Right cardiac atrium (tissue), 5 donors: ENCODE measurements at regions of chr14 and their contacts with region 1.

Region 1: GRCh38 chr14:89416002-89416995 is 734 bp downstream of the FOXN3 start:
- DNase-seq: peak; percentile 98 to 100 (median 98)
- ATAC-seq: peak; percentile 91
- H3K4me3 ChIP-seq: peak overlapping the region; percentile 98
- H3K27ac ChIP-seq: peak overlapping the region; percentile 82
- H3K4me1 ChIP-seq: peaks cover 5% of the 10 kb centered on the region
- H3K27me3 ChIP-seq: no peaks in the 10 kb centered on the region

Region 2: DNA sequence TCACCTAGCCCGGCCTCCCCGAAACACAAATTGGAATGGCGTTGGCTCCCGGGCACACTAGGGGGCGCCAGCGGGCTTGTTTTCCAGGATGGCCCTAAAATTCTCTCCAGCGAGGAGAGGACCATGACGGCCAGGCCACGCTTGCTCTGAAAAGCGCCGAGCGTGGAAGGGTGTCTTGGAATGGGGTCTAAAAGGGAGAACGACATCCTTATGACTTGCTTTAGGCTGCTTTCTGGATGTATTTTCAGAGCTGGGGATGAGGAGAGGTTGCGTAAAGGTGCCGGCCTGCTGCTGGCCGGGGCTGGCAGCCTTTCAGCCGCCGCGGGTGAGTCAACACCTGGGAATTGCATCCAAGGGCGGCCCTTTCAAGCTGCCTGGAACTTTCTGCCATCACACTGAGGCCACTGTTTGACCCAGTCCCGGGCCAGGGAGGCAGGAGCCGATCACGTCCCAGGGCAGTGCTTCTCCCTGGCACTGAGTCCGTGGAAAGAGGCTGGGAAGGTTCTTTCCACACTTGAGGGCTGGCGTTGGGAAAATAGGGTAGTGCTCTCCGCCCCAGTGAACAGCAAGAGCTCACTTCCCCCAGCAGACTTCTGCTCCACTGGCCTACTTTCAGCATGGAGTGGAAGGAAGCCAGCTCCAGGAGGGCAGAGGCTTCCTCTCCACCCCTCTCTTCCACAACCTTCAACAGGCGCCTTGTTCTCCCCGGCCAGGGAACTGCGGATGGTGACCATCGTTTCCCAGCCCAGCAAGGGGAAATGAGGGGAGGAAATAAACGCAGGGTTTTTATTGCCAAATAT is 375.6 kb before region 1 on chr14:
- intact Hi-C with region 1: loop called in 1 of 4 experiments (anchors 10 kb)
- DNase-seq: peak; percentile 91 to 95 (median 94)
- ATAC-seq: peak; percentile 94 to 97
- H3K4me3 ChIP-seq: peak overlapping the region; percentile 23
- H3K27ac ChIP-seq: peak overlapping the region; percentile 79
- H3K4me1 ChIP-seq: peaks cover 6% of the 10 kb centered on the region
- H3K27me3 ChIP-seq: no peaks in the 10 kb centered on the region

Region 3: DNA sequence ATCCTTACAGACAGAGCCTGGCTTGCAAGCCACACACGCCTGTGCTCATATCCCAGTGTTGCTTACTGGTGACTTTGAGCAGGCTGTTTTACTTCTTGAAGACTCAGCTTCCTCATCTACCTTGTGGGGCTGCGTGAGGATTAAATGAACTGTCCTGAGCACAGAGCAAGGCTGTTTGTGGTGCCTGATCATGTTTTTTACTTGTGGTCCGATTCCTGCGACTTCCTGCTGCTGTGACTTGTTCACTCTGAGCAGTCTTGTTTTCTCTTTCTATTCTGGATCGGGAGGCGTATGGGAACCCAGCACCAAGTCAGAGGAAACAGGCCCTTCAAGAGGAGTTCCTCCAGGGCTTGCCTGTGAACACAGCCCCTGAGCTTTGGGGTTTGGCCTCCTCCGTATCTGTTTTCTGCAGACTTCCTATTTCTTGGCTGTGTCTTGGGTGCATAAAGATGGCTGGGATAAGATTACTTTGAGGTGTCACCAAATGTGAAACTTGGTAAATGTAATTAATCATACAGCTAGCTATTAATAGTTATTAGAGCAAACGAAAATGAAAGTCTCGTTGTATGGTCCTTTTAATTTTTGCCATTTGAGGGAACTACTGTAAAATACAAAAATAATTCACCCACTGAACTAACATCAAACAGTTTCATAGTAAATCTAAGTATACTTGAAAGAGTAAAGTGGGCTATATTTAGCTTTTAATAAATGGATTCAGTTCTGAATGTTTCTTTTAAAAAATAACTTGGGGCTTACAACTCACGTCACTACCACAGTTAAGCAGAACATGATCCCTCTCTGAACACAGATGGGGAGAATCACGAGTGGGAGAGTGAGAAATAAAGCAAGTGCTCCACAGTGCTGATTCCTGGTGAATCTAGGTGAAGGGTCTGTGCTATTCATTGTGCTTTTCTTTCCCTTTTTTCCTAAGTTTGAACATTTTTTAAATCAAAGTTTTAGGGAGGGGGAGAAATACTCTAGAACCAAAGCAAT is 250.8 kb before region 1 on chr14:
- intact Hi-C with region 1: loop called in 1 of 4 experiments (anchors 10 kb)
- DNase-seq: peak in 2 of 3 donors; percentile 25 to 46
- ATAC-seq: peak; percentile 77 to 88
- H3K4me3 ChIP-seq: peak overlapping the region; percentile 30
- H3K27ac ChIP-seq: peak overlapping the region; percentile 81
- H3K4me1 ChIP-seq: peaks cover 8% of the 10 kb centered on the region
- H3K27me3 ChIP-seq: no peaks in the 10 kb centered on the region

Region 4: DNA sequence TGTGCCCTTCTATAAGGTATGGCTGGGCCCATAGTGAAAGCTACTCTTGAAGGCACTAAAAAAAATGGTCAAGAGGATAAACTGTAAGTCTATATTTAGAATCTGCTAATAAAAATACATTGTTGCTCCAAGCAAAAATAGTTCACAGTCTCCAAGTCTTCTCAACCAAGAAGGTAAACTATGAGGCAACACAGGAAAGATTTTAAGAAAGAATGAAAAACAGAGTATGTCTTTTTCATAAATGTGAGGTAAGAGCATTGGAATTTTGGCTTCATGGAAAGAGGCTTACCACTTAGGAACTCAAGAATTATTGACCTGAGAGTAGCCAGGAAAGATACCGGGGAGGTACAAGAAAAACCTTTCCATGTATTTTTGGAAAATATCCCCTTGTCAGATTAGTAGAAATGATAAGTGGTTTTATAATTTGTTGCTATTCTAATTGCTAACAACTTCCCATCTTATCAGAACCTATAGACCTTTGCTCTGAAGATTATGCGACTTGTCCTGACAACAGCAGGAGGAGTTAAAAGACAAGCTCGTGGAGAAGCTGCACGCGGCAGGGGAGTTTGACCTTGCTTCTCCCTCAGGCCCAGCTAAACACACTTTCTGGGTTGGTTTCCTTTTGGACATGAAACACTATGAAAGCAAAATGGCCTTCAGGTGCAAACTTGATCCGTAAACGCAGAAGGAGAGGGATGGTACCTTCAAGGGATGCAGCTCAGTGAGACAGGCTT is 237.3 kb before region 1 on chr14:
- intact Hi-C with region 1: no loop called
- DNase-seq: no peak
- ATAC-seq: no peak
- H3K4me3 ChIP-seq: no peak overlapping the region
- H3K27ac ChIP-seq: peak overlapping the region; percentile 23
- H3K4me1 ChIP-seq: peaks cover 7% of the 10 kb centered on the region
- H3K27me3 ChIP-seq: no peaks in the 10 kb centered on the region

Region 5: GRCh38 chr14:89190765-89191513 is 225.4 kb before region 1 on chr14:
- intact Hi-C with region 1: loop called in 1 of 4 experiments (anchors 10 kb)
- DNase-seq: no peak
- ATAC-seq: no peak
- H3K4me3 ChIP-seq: no peak overlapping the region
- H3K27ac ChIP-seq: no peak overlapping the region
- H3K4me1 ChIP-seq: peaks cover 10% of the 10 kb centered on the region
- H3K27me3 ChIP-seq: no peaks in the 10 kb centered on the region

Region 6: GRCh38 chr14:89489761-89490437 is 73.6 kb after region 1 on chr14:
- intact Hi-C with region 1: no loop called
- DNase-seq: peak in 1 of 3 donors; percentile 53
- ATAC-seq: peak in 1 of 2 donors; percentile 40
- H3K4me3 ChIP-seq: no peak overlapping the region
- H3K27ac ChIP-seq: no peak overlapping the region
- H3K4me1 ChIP-seq: peaks cover 6% of the 10 kb centered on the region
- H3K27me3 ChIP-seq: no peaks in the 10 kb centered on the region

Region 7: DNA sequence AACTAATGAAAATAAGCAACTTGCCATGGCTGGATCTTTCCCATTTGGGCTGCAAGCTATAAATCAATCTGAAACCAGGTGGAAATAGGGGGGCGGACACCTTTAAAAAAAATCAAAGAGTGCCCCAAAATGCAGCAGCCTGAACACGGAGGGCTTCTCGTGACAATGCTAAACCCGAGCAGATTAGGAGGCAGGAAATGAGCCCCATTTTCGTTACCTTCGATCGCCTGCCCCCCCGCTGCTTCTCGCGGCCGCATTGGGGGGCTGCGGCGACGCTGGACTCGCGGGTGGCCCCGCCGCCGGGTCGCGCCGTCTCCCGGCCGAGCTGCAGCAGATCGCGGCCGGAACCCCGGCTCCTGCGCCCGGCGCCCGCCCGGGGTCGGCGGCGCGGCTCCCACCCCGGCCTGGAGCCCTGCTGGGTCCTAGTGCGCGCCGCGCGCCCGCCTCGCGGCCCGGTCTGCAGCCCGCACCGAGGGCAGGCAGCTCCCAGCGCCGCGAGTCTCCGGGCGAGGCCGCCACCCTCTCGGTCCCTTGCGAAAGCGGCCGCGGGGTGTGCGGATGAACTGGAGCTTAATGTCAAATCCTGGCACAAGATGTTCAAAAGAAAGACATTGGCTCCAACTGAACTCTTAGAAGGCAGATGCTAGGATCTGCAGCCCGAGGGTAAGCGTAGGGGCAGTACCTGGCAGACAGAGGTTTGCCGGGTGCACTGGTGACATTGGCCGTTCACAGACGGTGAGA is 202.7 kb after region 1 on chr14:
- intact Hi-C with region 1: loop called in 2 of 4 experiments (anchors 5 to 10 kb)
- DNase-seq: peak; percentile 82 to 92 (median 90)
- ATAC-seq: peak; percentile 95 to 96
- H3K4me3 ChIP-seq: peak overlapping the region; percentile 95
- H3K27ac ChIP-seq: peak overlapping the region; percentile 76
- H3K4me1 ChIP-seq: peaks cover 3% of the 10 kb centered on the region
- H3K27me3 ChIP-seq: no peaks in the 10 kb centered on the region